RWPE1 (cell line): ENCODE measurements at regions of chr20 and their contacts with region 1.

Region 1: GRCh38 chr20:34312544-34313217 is 9.5 kb upstream of the AHCY start:
- DNase-seq: peak; percentile 93
- H3K27ac ChIP-seq: peak overlapping the region; percentile 0; the same call in 1 of the 2 replicates
- CTCF ChIP-seq: peak; percentile 100

Region 2: DNA sequence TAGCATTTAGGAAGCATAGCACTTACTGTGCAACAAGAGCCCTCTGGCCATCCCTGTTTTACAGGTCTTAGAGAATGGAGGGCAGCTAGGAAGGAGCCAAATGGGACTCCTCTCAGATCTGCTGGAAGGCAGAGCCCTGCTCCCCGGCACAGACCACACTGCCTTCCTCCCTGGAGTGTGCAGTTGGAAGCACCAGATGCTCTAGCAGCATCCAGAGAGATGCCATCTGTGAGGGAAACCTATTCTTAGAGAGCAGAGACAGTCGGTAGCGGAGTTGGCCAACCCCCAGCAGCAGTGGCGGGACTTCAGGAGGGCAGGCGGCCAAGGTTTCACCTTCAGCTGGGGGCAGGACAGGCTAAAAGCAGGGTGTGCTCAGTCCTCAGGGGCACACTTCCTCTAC is 609.8 kb before region 1 on chr20:
- CTCF ChIA-PET with region 1: no interaction called
- POLR2A ChIA-PET with region 1: no interaction called
- DNase-seq: no peak
- H3K27ac ChIP-seq: 0 out of 2 replicates have a peak overlapping the region, but pooled peaks have one; percentile 3
- CTCF ChIP-seq: no peak

Region 3: GRCh38 chr20:34215711-34216381 is 96.8 kb before region 1 on chr20:
- CTCF ChIA-PET with region 1: no interaction called
- POLR2A ChIA-PET with region 1: no interaction called
- DNase-seq: peak; percentile 82
- H3K27ac ChIP-seq: peak overlapping the region; percentile 30; the same call in 1 of the 2 replicates
- CTCF ChIP-seq: no peak

Region 4: DNA sequence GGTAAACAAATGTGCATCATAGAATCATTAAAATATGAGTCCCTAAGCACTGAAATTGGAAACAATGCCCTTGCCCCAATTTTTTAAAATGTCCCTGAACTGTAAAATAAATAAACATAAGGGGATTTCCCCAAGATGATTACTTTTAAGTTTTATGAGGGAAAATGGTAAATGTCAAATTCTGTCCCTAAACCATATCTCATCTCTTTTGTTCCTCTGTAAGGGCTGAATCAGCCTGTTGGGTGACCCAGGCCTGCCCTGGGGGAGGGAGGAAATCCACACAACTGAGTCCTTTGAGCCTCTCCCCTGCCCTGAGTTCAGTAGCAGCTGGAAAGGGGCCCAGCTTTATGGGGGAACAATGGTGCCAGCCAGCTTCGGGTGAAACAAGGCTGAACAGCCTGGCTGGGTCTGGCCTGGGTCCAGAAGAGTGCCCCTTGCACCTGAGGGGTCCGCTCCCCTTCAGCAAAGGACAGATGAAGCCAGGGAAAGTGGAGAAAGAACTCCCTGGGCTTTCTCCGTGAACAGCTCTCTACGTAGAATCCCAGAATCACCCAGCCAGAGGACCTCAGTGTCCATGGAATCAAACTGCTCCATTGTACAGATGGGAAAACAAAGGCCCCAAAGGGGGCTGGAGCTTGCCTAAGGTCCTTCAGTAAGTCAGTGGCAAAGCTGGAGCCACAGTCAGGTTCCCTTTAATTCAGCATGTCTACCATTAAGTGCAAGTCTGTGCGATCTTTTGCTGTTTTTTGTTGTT is 22.1 kb after region 1 on chr20:
- CTCF ChIA-PET with region 1: interaction called, 38 read pairs
- POLR2A ChIA-PET with region 1: interaction called, 4 read pairs
- DNase-seq: peak; percentile 60
- H3K27ac ChIP-seq: peak overlapping the region; percentile 91
- CTCF ChIP-seq: no peak

Region 5: DNA sequence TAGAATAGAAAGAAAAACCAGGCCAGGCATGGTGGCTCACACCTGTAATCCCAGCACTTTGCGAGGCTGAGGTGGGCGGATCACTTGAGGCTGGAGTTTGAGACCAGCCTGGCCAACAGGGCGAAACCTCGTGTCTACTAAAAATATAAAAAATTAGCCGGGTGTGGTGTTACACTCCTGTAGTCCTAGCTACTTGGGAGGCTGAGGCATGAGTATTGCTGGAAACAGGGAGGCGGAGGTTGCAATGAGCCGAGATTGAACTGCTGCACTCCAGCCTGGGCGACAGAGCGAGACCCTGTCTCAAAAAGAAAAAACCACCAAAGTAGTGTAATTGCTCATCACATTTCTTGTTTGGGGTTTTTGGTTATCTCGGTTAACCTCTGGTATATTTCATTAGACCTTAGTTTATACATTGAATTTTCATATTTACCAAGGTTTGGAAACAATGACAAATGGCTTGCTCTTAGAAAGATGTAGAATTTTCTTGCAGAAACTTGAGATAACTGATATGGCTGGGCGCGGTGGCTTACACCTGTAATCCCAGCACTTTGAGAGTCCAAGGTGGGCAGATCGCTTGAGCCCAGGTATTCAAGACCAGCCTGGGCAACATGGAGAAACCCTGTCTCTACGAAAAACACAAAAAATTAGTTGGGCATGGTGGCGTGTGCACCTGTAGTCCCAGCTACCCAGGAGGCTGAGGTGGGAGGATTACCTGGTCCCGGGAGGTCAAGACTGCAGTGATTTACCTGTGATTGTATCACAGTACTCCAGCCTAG is 64.6 kb after region 1 on chr20:
- CTCF ChIA-PET with region 1: interaction called, 20 read pairs
- POLR2A ChIA-PET with region 1: interaction called, 9 read pairs
- DNase-seq: no peak
- H3K27ac ChIP-seq: peak overlapping the region; percentile 5; the same call in 1 of the 2 replicates
- CTCF ChIP-seq: no peak

Region 6: DNA sequence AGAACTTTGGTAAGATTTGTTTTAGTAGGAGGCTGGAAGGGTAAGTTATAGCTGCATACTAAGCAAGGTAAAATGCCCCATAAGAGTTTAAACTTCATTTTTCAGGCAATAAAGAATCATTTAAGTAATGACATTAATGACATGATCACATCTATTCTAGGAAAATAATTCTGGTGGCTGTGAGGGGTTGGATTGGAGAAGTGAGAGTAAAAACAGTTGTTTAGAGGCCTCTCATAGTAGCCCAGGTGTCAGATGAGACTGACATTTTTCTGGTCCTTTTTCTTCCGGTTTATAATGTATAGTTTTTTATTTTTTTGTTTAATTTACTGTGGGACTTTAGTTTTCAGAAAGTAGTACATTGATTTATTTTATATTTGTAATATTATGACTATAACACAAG is 91.2 kb after region 1 on chr20:
- CTCF ChIA-PET with region 1: interaction called, 58 read pairs
- POLR2A ChIA-PET with region 1: no interaction called
- DNase-seq: no peak
- H3K27ac ChIP-seq: no peak overlapping the region
- CTCF ChIP-seq: no peak

Region 7: GRCh38 chr20:34426026-34426425 is 113.3 kb after region 1 on chr20:
- CTCF ChIA-PET with region 1: interaction called, 11 read pairs
- POLR2A ChIA-PET with region 1: no interaction called
- DNase-seq: no peak
- H3K27ac ChIP-seq: no peak overlapping the region
- CTCF ChIP-seq: no peak

Region 8: DNA sequence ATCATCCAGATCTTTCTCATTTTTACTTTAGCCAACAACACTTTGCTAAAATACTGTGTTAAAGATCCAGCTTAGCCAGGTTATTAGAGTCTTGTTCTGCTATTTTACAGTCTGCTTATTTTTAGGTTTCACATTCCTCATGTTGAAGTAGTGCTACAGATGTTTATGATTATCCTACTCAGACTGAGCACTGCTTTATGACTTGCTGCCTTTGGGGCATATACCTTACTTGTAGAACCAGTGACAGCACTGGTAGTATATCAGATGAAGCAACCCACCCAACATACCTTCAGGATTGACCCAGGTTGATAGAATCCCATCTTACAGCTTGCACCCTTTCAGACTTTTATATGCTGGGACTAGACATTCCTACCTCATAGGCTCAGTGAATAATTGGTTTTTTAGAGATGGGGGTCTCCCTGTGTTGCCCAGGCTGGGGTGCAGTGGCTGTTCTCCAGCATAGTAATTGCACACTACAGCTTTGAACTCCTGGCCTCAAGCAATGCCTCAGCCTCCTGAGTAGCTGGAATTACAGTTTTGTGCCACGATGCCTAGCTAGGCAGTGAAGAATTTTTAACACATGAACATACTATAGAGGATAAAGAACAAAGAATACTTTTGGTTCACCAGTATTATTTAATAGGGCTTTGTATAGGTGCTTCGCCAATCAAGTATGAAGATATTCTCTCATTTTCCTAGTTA is 139.8 kb after region 1 on chr20:
- CTCF ChIA-PET with region 1: interaction called, 27 read pairs
- POLR2A ChIA-PET with region 1: no interaction called
- DNase-seq: no peak
- H3K27ac ChIP-seq: no peak overlapping the region
- CTCF ChIP-seq: no peak

Region 9: DNA sequence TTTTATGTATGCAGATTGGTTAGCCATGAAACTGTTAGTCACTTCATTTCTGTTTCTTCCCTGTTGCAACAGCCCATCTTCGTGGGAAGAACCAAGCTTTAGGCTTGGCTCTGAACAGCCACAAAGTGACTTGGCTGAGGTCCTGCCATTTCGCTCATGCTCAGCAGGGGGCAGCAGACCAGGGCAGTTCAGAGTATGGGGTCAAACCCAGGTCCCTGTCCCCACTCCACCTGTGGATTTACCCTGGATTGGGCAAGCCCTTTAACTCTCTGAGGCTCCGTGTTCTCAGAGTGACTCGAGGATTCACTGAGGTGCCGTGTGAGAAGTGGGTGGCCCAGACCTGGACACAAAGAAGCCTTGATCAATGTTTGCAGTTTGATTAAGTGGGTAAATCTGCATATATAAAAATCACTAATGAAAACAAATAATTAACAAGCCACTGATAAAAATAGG is 226.0 kb after region 1 on chr20:
- CTCF ChIA-PET with region 1: interaction called, 11 read pairs
- POLR2A ChIA-PET with region 1: no interaction called
- DNase-seq: peak; percentile 42
- H3K27ac ChIP-seq: no peak overlapping the region; the same call in 1 of the 2 replicates
- CTCF ChIP-seq: peak; percentile 84